ENCODE measurements at regions of chr18 and their contacts with region 1.

Region 1: DNA sequence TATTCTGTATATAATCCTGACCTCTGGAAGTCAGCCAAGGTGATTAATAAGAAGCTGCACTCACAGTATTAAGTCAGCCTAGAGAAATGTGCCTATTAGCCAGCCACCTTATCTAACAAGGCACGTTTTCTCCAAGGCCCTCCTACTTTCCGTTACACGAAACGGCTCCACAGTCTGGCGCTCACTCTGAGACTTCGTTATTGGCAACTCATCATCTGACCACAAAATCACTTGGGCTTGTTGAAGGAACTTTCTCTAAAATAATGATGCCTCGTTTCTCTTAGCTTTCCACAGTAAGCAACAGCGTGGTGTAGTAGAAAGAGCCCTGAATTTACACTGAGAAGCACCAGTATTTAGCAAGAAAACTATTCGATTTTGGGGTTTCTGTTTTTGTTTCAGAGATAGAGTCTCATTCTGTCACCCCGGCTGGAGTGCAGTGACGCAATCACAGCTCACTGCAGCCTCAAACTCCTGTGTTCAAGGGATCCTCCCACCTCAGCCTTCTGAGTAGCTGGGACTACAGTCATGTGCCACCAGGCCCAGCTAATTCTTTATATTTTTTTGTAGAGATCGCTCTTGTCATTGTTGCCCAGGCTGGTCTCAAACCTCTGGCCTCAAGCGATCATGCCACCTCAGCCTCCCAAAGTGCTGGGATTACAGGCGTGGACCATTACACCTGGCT is 53.6 kb upstream of the SLC14A1 start:
- DNase-seq: peak; percentile 44
- CTCF ChIP-seq: no peak

Region 2: DNA sequence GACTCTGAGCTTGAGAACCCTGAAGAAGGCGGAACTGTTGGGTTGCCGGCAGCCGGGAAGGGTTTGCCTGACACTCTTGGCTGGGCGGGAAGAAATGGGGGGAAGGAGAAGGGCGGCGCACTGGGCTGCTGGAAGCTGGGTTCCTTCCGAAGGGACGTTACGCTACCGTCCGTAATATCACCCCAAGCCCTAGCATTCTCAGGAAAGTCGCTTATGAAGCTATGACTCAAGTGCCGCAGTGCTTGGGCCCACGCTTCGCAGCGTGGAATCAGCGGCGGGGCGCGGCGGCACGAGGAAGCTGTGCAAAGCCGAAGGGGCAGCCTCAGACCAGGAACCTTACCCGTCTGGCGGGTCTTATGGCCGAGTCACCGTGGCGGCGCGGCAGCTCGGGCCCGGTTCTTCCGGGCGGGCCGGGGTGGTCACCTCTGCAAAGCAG is 104.8 kb after region 1 on chr18:
- in situ Hi-C with region 1: no loop called
- DNase-seq: peak; percentile 68
- CTCF ChIP-seq: no peak

Region 3: DNA sequence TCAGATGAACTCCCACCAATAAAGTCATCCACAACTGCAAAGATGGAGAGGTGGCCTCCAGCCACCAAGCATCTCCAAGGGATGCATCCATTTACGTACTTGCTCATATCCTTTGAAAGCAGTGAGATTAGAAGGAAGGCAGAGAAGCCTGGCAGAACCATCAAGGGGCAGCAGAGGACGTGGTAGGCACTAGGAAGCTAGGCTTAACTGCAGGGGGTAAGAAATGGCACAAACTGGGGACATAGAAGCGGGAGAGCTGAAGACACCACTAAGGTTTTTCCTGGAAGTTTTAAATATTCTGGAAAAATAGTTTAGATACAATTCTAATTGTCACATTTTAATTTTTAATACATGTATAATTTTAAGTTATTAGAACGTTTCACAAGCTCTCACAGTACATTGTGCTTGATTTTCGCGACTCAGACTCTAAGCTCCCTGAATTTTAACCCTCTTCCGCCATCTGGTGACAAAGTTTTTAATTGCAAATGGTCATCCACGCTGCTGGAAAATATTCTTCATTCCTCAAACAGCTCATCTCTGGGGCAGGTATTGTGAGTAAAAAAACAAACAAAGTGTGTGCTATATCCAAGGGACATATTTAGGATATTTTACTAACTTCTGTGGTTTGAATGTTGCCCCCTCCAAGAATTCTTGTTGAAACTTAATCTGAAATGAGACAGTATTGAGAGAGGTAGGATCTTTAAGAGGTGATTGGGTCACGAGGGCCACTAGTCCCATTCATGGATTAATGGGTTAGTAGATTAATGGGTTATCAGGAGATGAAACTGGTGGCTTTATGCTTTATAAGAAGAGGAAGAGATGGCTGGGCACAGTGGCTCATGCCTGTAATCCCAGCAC is 403.3 kb after region 1 on chr18:
- in situ Hi-C with region 1: loop called (anchors 10 kb)
- DNase-seq: peak; percentile 66
- CTCF ChIP-seq: peak; percentile 55